A673 (cell line): ENCODE measurements at regions of chr11 and their contacts with region 1.

Region 1: GRCh38 chr11:47649276-47649675 is 6.9 kb upstream of the MTCH2 start:
- DNase-seq: no peak
- H3K4me3 ChIP-seq: no peak overlapping the region
- H3K27ac ChIP-seq: no peak overlapping the region
- H3K4me1 ChIP-seq: no peaks in the 10 kb centered on the region
- H3K27me3 ChIP-seq: no peaks in the 10 kb centered on the region
- CTCF ChIP-seq: no peak

Region 2: GRCh38 chr11:47675851-47676250 is 26.6 kb after region 1 on chr11:
- CTCF ChIA-PET with region 1: interaction called, 11 read pairs
- POLR2A ChIA-PET with region 1: no interaction called
- intact Hi-C with region 1: no loop called
- DNase-seq: no peak
- H3K4me3 ChIP-seq: no peak overlapping the region
- H3K27ac ChIP-seq: no peak overlapping the region
- H3K4me1 ChIP-seq: no peaks in the 10 kb centered on the region
- H3K27me3 ChIP-seq: no peaks in the 10 kb centered on the region
- CTCF ChIP-seq: no peak

Region 3: GRCh38 chr11:47766305-47767227 is 117.3 kb after region 1 on chr11:
- CTCF ChIA-PET with region 1: no interaction called
- POLR2A ChIA-PET with region 1: no interaction called
- intact Hi-C with region 1: no loop called
- DNase-seq: peak; percentile 86
- H3K4me3 ChIP-seq: peak overlapping the region; percentile 60
- H3K27ac ChIP-seq: peak overlapping the region; percentile 97
- H3K4me1 ChIP-seq: peaks cover 21% of the 10 kb centered on the region
- H3K27me3 ChIP-seq: no peaks in the 10 kb centered on the region
- CTCF ChIP-seq: no peak